Activated B cell treated with CpG ODN at 0.5 μM for 24 hours (primary cell): ENCODE measurements at regions of chr11 and their contacts with region 1.

Region 1: DNA sequence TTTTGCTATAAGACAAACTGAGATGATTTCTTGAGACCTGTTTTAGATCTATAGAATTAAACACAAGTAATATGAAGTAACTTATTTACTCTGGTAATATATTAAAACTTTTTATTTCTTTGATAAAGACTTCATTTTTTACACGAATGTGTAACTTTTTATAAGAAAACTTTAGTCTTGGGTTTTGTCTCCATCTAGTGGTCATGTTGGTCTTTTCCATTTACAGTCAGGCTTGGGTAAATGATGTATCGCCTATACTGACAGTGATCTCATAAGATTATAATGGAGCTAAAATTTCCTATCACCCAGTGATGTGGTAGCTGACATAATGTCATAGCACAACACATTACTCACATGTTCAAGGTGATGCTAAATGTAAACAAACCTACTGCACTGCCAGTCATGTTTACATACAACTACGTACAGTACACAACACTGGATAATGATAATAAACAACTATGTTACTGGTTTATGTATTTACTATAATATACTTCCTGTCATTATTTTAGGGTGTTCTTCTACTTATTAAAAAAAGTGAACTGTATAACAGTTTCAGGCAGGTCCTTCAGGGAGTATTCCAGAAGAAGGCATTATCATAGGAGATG is 7.5 kb upstream of the C11orf97 start:
- DNase-seq: no peak
- ATAC-seq: peak; percentile 47
- H3K4me3 Mint-ChIP-seq: no peak overlapping the region
- H3K27ac Mint-ChIP-seq: no peak overlapping the region
- H3K4me1 Mint-ChIP-seq: no peaks in the 10 kb centered on the region
- H3K27me3 Mint-ChIP-seq: no peaks in the 10 kb centered on the region
- CTCF ChIP-seq: peak; percentile 79

Region 2: GRCh38 chr11:93234602-93235207 is 1270.1 kb before region 1 on chr11:
- CTCF ChIA-PET with region 1: no interaction called
- POLR2A ChIA-PET with region 1: no interaction called
- intact Hi-C with region 1: loop called (anchors 1 kb)
- DNase-seq: peak; percentile 49
- ATAC-seq: peak; percentile 97
- H3K4me3 Mint-ChIP-seq: no peak overlapping the region
- H3K27ac Mint-ChIP-seq: no peak overlapping the region
- H3K4me1 Mint-ChIP-seq: no peaks in the 10 kb centered on the region
- H3K27me3 Mint-ChIP-seq: peaks cover 20% of the 10 kb centered on the region
- CTCF ChIP-seq: peak; percentile 73

Region 3: DNA sequence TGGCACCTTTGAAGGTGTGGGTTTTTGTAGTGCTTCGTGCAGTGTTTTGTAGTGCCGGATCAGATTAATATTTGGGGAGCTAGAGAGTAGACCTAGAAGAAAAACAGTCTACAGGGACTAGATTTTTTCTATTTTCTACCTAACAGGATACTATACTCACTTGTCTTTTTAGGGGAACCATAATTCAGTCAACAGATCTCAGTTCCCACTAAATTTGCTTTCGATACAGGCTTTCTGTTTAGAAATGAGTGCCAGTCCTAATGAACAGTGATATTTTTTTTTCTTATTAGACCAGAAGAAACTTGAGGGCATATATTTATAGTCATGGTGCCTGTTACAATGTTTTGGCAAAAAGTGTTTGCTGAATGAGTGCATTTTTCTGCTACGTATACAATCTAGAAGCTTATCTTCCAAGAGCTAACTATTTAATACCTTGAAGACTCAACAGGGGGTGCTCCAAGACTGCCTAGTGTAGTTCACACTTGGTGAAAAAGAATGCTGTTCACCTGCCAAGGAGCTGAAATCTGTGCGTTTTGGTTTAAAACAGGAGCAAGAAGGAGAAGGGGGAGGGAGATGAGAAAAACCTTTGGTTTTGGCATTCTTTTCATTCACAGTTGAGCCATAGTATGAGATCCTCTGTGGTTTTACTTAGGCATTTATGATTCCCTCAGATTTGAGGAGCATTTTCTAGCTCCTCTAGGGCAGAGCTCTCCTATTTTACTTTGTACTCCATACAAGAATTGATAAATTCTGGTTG is 609.5 kb before region 1 on chr11:
- CTCF ChIA-PET with region 1: interaction called, 13 read pairs
- POLR2A ChIA-PET with region 1: no interaction called
- intact Hi-C with region 1: loop called (anchors 1 kb)
- DNase-seq: no peak
- ATAC-seq: peak; percentile 31
- H3K4me3 Mint-ChIP-seq: no peak overlapping the region
- H3K27ac Mint-ChIP-seq: no peak overlapping the region
- H3K4me1 Mint-ChIP-seq: no peaks in the 10 kb centered on the region
- H3K27me3 Mint-ChIP-seq: peaks cover 29% of the 10 kb centered on the region
- CTCF ChIP-seq: no peak

Region 4: DNA sequence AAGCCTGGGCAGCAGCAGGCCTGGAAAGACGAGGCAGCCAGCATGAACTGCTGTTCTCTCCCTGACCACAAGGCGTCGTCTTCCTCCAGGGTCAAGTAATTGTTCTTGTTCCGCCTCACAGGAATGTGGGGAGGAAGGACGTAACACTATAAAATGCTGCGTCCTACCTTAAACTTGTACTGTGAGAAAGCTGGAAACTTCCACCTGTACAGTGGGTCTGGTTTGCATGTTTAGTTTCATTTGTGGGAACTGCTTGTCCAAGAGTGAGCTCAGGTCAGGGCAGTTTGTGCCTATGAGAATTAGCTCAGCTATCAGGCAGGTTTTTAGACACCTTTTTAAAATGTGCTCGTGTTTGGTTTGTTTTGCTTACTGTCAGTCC is 320.9 kb before region 1 on chr11:
- CTCF ChIA-PET with region 1: interaction called, 5 read pairs
- POLR2A ChIA-PET with region 1: no interaction called
- intact Hi-C with region 1: loop called (anchors 1 kb)
- DNase-seq: peak; percentile 22
- ATAC-seq: peak; percentile 62
- H3K4me3 Mint-ChIP-seq: no peak overlapping the region
- H3K27ac Mint-ChIP-seq: no peak overlapping the region
- H3K4me1 Mint-ChIP-seq: peaks cover 24% of the 10 kb centered on the region
- H3K27me3 Mint-ChIP-seq: no peaks in the 10 kb centered on the region
- CTCF ChIP-seq: no peak

Region 5: DNA sequence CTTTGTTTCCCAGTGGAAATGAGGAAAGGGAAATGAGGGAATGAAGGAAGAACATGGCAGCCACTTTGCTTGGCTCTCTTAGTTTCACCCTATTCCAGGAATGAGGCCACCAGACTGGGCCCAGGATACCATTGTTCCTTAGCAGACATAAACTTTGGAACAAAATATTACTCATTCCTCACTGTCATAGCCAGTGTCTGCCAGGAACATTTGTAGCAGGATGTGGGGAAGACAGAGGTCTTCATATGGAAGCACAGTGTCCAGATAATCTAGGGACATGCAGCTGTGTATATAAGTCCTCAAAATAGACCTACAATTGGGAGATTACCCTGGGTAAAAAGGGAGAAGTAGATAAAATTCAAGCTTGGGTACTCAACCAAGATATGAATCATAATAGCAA is 23.8 kb after region 1 on chr11:
- CTCF ChIA-PET with region 1: no interaction called
- POLR2A ChIA-PET with region 1: no interaction called
- intact Hi-C with region 1: no loop called
- DNase-seq: no peak
- ATAC-seq: no peak
- H3K4me3 Mint-ChIP-seq: no peak overlapping the region
- H3K27ac Mint-ChIP-seq: no peak overlapping the region
- H3K4me1 Mint-ChIP-seq: no peaks in the 10 kb centered on the region
- H3K27me3 Mint-ChIP-seq: peaks cover 40% of the 10 kb centered on the region
- CTCF ChIP-seq: no peak